ENCODE measurements at regions of chr13 and their contacts with region 1.

Region 1: GRCh38 chr13:33146843-33147611 is 130.8 kb downstream of the KL start:
- DNase-seq: no peak
- ATAC-seq: peak; percentile 76
- H3K4me3 Mint-ChIP-seq: no peak overlapping the region
- H3K27ac Mint-ChIP-seq: peak overlapping the region; percentile 32
- H3K4me1 Mint-ChIP-seq: peaks cover 8% of the 10 kb centered on the region
- H3K27me3 Mint-ChIP-seq: no peaks in the 10 kb centered on the region
- CTCF ChIP-seq: no peak

Region 2: DNA sequence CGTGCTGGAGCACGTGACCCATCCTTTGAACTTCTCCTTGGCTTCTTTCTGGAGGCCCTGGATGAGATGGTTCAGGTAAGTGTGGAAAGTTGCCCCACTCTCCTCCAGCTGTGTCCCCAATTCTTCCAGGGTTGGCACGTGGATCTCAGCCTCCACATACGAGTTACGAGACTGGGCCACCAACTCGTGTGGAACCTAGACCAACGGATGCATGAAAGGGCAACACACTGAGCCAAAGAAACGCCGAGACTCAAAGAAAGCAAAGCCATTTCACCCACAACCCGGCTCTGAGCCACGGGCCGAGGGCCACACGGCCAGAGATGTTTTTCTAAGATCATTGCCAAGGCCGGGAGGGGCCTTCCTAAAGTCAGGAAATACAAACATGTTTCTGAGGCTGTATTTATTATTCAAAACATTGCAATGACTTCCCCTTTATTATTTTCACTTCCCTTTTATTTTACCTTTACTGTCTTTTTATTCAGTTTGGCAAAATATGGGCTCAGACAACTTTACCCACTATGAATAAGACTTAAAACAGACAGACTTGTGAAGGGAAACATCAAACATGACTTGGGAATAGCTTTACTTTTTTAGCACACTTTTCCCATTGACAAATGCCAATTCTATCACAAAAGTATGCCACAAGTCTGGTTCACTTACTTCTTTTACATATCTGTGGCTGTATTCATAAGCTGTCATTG is 36.2 kb before region 1 on chr13:
- CTCF ChIA-PET with region 1: no interaction called
- POLR2A ChIA-PET with region 1: no interaction called
- intact Hi-C with region 1: loop called (anchors 1 kb)
- DNase-seq: no peak
- ATAC-seq: peak; percentile 63
- H3K4me3 Mint-ChIP-seq: peak overlapping the region; percentile 68
- H3K27ac Mint-ChIP-seq: peak overlapping the region; percentile 59
- H3K4me1 Mint-ChIP-seq: peaks cover 58% of the 10 kb centered on the region
- H3K27me3 Mint-ChIP-seq: peaks cover 23% of the 10 kb centered on the region
- CTCF ChIP-seq: no peak